Prostate gland (tissue), 2 donors: ENCODE measurements at regions of chr6 and their contacts with region 1.

Region 1: GRCh38 chr6:116287689-116288282 is 8.1 kb upstream of the TSPYL1 start:
- DNase-seq: no peak
- H3K4me3 ChIP-seq: no peak overlapping the region
- H3K27ac ChIP-seq: no peak overlapping the region
- H3K4me1 ChIP-seq: no peaks in the 10 kb centered on the region
- H3K27me3 ChIP-seq: no peaks in the 10 kb centered on the region
- CTCF ChIP-seq: peak; percentile 62 to 87 (median 78)
- POLR2A ChIP-seq: no peak

Region 2: DNA sequence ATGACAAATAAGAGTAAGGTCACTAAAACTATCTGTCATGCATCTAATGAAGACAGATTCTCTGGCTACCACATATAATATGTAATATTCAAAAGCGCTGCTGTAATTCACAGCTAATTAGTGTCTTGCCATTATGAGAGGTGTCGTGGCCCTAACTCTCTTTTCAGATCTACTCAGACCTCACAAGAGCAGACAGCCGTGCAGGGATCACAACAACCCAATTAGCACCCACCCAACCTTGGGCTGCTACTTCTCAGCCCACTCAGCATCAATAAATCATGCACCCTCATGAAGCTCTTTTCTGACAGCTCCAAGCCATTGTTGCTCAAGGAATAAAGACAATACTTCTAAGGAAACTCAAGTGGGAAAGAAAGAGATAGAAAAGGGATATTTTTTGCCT is 288.6 kb before region 1 on chr6:
- intact Hi-C with region 1: no loop called
- DNase-seq: no peak
- H3K4me3 ChIP-seq: no peak overlapping the region
- H3K27ac ChIP-seq: no peak overlapping the region
- H3K4me1 ChIP-seq: no peaks in the 10 kb centered on the region
- H3K27me3 ChIP-seq: no peaks in the 10 kb centered on the region
- CTCF ChIP-seq: no peak
- POLR2A ChIP-seq: no peak

Region 3: DNA sequence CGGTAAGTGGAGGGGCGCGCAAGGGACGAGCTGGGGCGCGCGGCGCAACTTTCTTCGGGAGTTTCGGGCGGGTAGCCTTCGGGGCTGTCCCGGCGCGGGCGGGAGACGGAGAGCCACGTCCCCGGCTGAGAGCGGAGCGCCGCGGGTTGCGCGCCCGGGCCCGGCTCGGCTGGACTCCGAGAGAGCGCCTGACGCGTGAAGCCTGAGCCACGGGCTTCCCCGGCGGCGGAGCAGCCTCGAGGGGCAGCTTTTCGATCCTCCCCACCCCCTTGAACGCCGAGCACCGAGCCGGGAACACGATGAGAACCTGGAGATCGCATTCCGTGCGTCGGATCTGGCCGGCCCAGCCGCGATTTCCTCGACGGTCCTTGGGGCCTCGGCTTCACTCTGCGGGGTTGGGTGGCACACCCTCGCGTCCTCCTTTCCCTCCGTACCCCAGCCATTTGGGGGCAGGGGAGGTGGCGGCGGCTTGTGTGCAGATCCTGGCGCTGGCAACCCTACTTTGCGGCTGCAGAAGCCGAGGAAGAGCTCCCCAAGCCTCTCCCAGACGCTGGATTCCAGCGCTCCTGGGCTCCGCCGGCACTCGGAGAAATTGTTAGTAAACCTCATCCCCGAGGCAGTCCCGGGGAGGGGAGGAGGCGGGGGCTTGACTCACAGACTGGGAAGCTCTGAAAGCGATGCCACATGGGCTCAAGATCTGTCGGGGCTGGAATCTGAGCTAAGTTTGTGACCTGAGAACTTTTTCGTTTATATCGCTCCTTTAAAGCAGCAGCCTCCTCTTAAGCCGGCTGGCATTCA is 83.5 kb after region 1 on chr6:
- intact Hi-C with region 1: loop called (anchors 5 kb)
- DNase-seq: peak; percentile 65
- H3K4me3 ChIP-seq: peak overlapping the region; percentile 61 to 70
- H3K27ac ChIP-seq: peak overlapping the region; percentile 89 to 93
- H3K4me1 ChIP-seq: no peaks in the 10 kb centered on the region
- H3K27me3 ChIP-seq: no peaks in the 10 kb centered on the region
- CTCF ChIP-seq: no peak
- POLR2A ChIP-seq: peak; percentile 38

Region 4: GRCh38 chr6:116387374-116387773 is 99.6 kb after region 1 on chr6:
- intact Hi-C with region 1: no loop called
- DNase-seq: no peak
- H3K4me3 ChIP-seq: no peak overlapping the region
- H3K27ac ChIP-seq: no peak overlapping the region
- H3K4me1 ChIP-seq: no peaks in the 10 kb centered on the region
- H3K27me3 ChIP-seq: no peaks in the 10 kb centered on the region
- CTCF ChIP-seq: no peak
- POLR2A ChIP-seq: no peak

Region 5: GRCh38 chr6:116447496-116448011 is 159.8 kb after region 1 on chr6:
- intact Hi-C with region 1: loop called (anchors 5 kb)
- DNase-seq: no peak
- H3K4me3 ChIP-seq: no peak overlapping the region
- H3K27ac ChIP-seq: no peak overlapping the region
- H3K4me1 ChIP-seq: no peaks in the 10 kb centered on the region
- H3K27me3 ChIP-seq: no peaks in the 10 kb centered on the region
- CTCF ChIP-seq: no peak
- POLR2A ChIP-seq: no peak